Head of caudate nucleus (tissue), 42 donors: ENCODE measurements at regions of chr18 and their contacts with region 1.

Region 1: DNA sequence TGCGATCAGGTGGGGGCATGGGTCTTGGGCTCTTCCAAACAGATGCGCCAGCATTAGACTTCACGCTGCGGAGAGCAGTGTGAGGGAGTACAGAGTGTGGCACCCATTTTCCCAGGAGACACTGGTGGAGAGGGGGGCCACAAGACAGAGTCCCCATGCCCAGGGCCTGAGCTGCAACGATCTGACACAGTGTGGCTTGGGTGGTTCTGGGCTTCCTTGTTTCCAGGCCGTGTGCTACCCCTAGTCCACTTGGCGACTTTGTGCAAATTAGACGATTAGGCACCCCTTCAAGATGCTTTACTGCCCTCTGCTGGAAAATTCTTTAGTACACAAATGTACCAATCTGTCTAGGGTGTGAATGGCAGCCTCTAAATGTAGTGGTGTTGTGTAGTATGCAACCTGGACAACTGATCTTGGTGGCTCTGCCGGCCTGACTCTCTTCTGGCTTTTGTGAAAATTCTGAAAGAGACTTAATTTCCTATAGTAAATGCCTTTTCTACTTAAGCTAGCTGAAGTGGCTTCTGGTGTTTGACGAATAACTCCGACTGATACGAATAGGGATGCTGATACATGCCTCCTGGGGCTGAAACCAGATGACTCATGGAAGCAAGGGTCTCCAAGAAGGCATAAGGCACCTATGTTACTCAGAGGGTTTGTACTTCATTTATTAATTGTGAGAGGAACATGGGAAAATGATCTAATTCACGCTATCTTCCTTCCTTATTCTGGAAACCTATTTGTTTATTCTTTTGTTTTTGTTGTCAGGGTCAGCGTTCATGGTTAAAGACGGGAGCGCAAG is 92.3 kb upstream of the SMAD2 start:
- DNase-seq: peak in 15 of 42 donors; percentile 15 to 77 (median 40)

Region 2: DNA sequence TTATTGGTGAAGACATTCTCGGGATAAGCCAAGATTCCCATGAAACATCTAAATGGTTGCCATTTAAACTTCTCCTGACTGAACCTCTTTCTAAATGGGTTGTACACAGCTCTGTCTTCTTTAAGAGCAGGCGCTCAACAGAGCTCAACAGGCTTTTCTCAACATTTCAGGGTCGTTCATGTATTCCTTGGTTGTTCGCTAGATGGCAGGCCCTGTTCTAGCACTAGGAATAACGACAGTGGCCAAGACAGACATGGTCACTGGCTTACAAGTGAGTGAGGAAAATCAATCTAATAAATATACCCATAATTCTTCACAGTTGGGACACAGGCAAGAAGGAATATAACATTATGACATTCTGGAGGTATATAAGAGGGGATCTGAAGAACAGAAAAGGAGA is 246.8 kb before region 1 on chr18:
- intact Hi-C with region 1: loop called (anchors 5 kb)
- DNase-seq: peak in 16 of 42 donors; percentile 11 to 72 (median 29)

Region 3: GRCh38 chr18:47930931-47931717 is 91.6 kb before region 1 on chr18:
- intact Hi-C with region 1: loop called (anchors 5 kb)
- DNase-seq: peak; percentile 93 to 100 (median 99)

Region 4: DNA sequence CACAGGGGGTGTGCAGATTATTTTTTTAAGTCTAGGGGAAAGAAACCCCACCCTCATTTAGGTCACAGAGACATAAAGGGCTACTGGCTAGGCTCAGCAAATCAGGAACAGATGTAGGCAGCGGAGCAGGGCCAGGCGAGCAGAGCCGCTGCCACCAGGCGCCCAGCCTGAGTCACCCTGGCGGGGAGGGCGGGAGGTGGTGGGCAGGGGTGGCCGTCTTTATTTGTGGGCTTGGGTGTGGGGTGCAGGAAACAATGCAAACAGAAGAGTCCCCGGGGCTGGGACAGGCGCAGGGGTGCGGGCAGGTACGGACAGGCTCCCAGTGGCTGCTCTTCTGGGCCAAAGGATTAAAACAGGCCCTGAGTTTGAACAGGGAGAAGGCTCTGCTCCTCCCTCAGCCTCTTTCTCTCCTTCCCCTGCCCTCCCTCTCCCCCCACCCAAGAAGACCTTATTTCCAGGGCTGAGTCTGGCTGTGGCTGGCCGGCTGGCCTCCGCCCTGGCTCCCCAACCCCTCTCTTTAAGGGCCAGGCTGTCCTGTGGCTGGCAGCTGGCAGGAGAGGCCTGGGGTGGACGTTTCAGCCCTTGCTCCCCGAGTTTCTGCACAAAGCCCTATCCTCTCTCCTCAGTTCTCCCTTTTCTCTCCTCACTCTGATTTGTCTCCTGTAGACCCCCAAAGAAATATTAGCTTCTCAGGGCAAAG is 50.7 kb after region 1 on chr18:
- intact Hi-C with region 1: no loop called
- DNase-seq: no peak